ENCODE measurements at regions of chr6 and their contacts with region 1.

Region 1: GRCh38 chr6:47529743-47530142 is 52.2 kb downstream of the CD2AP start:
- DNase-seq: no peak
- CTCF ChIP-seq: no peak

Region 2: DNA sequence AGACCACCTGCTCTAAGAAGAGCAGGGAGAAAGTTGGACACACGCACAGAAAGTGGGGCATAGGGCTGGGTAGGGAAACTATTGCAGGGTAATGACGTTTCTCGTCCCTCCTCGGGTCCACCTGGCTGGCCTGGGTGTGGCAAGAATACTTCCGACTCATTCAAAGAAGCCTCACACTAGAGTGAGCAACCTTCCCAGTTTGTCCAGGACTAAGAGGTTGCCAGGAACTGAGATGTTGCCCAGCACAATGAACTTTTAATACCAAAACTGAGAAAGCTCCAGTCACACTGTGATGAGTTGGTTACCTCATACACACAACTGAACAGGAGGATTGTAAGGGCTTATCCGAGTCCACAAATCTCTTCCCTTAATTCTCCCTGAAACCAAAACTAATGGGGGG is 413.1 kb before region 1 on chr6:
- CTCF ChIA-PET with region 1: no interaction called
- POLR2A ChIA-PET with region 1: no interaction called
- DNase-seq: no peak
- CTCF ChIP-seq: no peak

Region 3: DNA sequence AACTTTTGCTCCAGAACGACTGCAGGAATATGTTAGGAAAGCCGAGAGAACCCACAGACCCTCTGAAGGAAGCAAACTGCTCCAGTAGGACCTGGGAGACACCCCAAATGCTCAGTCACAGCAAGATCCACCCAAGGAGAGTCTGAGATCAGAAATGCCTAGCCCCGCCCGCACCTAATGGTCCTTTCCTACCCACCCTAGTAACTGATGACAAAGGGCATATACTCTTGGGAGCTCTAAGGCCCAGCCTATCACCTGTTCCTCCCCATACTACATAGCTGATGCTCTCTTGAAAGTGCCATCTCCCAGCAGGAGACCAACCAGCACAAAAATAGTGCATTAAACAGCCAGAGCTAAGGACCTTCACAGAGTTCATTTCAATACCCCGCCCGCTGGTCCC is 15.5 kb after region 1 on chr6:
- CTCF ChIA-PET with region 1: interaction called, 14 read pairs
- POLR2A ChIA-PET with region 1: no interaction called
- DNase-seq: no peak
- CTCF ChIP-seq: no peak

Measured in GM10248 (cell line).